ENCODE measurements at regions of chr20 and their contacts with region 1.

Region 1: DNA sequence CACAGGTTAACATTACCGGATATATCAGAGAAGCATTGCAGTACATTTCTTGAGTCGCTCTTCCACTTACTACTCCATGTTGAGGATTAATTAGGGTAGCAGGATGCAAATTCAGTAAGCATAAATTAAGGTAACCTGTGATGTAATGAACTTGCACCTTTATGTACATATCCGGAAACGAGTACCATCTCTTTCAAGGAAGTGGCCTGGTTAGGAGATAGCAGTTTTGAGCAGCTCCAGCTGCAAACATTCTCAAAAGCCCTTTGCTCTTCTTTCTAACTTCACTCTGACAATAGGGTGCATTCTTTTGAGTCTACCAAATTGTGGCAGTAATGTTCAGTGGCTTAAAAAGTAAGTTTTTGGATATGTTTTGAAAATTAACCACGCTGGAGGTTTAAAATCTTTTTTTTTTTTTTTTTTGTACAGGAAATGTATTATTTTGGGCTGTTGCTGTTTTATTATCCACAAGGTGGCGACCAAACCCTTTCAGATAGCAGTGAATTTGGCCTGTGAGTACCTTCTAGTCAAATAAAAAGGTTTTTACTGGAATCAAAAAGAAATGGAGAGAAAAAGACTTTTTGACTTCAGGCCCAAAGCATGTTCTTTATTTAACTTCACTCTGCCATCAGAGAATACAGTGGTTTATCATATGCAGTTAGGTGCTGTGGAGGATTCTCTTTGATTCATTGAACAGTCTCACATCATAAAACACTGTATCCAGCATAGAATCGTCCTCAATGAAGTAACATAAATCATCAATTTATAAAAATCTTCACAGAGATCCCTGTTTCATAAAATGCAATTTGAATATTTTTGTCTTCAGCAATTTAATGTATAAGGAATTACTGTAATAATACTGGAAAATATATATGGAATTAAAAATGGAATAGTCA is 8.9 kb downstream of the FAM217B start:
- DNase-seq: peak; percentile 39
- H3K4me3 Mint-ChIP-seq: peak overlapping the region; percentile 41
- H3K27ac Mint-ChIP-seq: peak overlapping the region; percentile 90
- H3K4me1 Mint-ChIP-seq: peaks cover 18% of the 10 kb centered on the region
- H3K27me3 Mint-ChIP-seq: no peaks in the 10 kb centered on the region

Region 2: GRCh38 chr20:59743767-59744485 is 205.1 kb before region 1 on chr20:
- CTCF ChIA-PET with region 1: no interaction called
- POLR2A ChIA-PET with region 1: no interaction called
- DNase-seq: no peak
- H3K4me3 Mint-ChIP-seq: no peak overlapping the region
- H3K27ac Mint-ChIP-seq: no peak overlapping the region
- H3K4me1 Mint-ChIP-seq: no peaks in the 10 kb centered on the region
- H3K27me3 Mint-ChIP-seq: no peaks in the 10 kb centered on the region

Region 3: GRCh38 chr20:59933849-59934596 is 15.1 kb before region 1 on chr20:
- CTCF ChIA-PET with region 1: interaction called, 39 read pairs
- POLR2A ChIA-PET with region 1: interaction called, 12 read pairs
- DNase-seq: peak; percentile 78
- H3K4me3 Mint-ChIP-seq: peak overlapping the region; percentile 70
- H3K27ac Mint-ChIP-seq: no peak overlapping the region
- H3K4me1 Mint-ChIP-seq: peaks cover 28% of the 10 kb centered on the region
- H3K27me3 Mint-ChIP-seq: peaks cover 2% of the 10 kb centered on the region

Measured in activated CD4-positive, alpha-beta memory T cell treated with anti-CD3 and anti-CD28 coated beads, Interleukin-2, amount 10 ng/mL, durations not matched to agents 7 days and 5 days (primary cell).